H1 (cell line): ENCODE measurements at regions of chr15 and their contacts with region 1.

Region 1: DNA sequence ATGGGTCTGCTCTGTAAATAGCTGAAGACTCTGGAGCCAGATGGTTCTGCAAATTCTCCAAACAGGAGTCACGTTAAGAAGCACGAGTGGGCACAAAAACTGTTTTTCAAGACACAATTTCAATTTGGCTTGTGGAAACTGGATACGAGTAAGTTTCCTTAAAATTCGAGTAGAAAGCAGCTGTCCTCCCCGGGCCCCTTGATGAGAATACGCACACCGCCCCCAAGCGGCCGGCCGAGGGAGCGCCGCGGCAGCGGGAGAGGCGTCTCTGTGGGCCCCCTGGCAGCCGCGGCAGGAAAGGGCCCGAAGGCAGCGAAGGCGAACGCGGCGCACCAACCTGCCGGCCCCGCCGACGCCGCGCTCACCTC is 778 bp upstream of the THBS1 start:
- DNase-seq: peak; percentile 71 to 99
- H3K4me3 ChIP-seq: peak overlapping the region; percentile 58 to 81 (median 79)
- H3K27ac ChIP-seq: peak overlapping the region; percentile 87; the same call in 1 of the 2 replicates
- H3K4me1 ChIP-seq: peaks cover 9 to 24% (median 11%) of the 10 kb centered on the region in 4 experiments
- H3K27me3 ChIP-seq: peaks cover 0 to 5% (median 0%) of the 10 kb centered on the region in 4 experiments; a peak in 2 of 7 replicates
- CTCF ChIP-seq: peak; percentile 77 to 99 (median 79)
- EP300 ChIP-seq: no peak
- POLR2A ChIP-seq: peak; percentile 28 to 44; a peak in 2 of 3 replicates
- RAD21 ChIP-seq: peak; percentile 85 to 90

Region 2: DNA sequence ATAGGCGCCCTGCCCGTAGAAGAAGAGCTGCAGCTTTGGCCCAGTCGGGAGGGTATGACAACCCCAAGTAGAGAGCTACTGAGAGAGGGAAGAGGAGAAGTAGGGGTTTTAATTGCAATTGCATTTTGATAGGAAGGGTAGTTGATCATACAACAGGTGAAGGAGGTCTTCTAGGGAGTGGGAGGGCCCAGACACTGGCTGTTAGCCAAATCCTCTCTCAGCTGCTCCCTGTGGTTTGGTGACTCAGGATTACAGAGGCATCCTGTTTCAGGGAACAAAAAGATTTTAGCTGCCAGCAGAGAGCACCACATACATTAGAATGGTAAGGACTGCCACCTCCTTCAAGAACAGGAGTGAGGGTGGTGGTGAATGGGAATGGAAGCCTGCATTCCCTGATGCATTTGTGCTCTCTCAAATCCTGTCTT is 408.1 kb before region 1 on chr15:
- CTCF ChIA-PET with region 1: interaction called, 13 read pairs
- POLR2A ChIA-PET with region 1: interaction called, 41 read pairs
- DNase-seq: peak; percentile 58 to 77
- H3K4me3 ChIP-seq: no peak overlapping the region
- H3K27ac ChIP-seq: peak overlapping the region; percentile 67
- H3K4me1 ChIP-seq: peaks cover 5 to 17% (median 12%) of the 10 kb centered on the region in 4 experiments; a peak in 6 of 7 replicates
- H3K27me3 ChIP-seq: no peaks in the 10 kb centered on the region
- CTCF ChIP-seq: peak in 2 of 3 experiments; percentile 66 to 70; a peak in 3 of 4 replicates
- EP300 ChIP-seq: no peak
- POLR2A ChIP-seq: peak in 1 of 2 experiments; percentile 27; a peak in 1 of 3 replicates
- RAD21 ChIP-seq: peak; percentile 92 to 95

Region 3: DNA sequence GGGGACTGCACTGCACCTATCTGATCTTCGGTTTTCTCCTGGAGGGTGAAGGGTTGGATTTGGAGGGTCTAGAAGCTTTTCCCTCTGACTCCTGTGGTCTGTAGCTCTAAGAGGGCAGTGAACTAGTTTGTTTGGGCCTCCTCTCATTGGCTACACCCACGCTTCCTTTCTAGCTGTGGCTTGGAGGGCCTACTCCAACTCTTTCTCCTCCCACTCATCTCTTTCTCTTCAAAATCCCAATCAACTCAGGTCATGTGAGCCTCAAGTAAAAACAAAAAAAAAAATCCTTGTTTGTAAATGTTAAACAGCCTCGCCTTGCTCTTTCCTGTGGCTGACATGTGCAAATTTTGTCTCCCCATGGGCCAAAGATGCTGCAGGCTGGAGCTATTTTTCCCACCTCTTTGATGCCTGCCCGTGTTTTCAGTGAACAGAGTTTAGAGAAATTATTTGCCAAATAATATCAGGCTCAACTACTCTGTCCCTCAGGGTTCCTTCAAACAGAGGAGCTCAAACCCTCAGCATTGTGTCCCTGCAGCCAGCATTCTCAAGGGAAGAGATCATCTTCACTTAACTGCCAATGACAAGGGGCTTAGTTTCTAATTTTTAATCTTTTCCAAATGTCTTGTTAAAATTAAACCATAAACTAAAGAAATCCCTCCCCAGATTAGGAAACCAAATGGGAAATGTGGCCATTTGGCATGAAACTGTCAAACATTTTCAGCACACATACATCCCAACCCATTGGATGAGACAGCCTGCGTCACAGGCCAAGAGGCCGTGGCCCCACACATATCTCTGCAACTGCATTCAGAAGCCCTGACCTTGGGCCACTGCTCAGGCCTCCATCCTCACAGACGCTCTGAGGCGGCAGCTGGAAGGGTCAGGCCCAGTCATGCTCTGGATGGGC is 114.0 kb before region 1 on chr15:
- CTCF ChIA-PET with region 1: interaction called, 3 read pairs
- POLR2A ChIA-PET with region 1: interaction called, 12 read pairs
- DNase-seq: no peak
- H3K4me3 ChIP-seq: no peak overlapping the region
- H3K27ac ChIP-seq: no peak overlapping the region
- H3K4me1 ChIP-seq: no peaks in the 10 kb centered on the region; a peak in 1 of 7 replicates
- H3K27me3 ChIP-seq: no peaks in the 10 kb centered on the region
- CTCF ChIP-seq: no peak
- EP300 ChIP-seq: no peak
- POLR2A ChIP-seq: no peak
- RAD21 ChIP-seq: no peak

Region 4: DNA sequence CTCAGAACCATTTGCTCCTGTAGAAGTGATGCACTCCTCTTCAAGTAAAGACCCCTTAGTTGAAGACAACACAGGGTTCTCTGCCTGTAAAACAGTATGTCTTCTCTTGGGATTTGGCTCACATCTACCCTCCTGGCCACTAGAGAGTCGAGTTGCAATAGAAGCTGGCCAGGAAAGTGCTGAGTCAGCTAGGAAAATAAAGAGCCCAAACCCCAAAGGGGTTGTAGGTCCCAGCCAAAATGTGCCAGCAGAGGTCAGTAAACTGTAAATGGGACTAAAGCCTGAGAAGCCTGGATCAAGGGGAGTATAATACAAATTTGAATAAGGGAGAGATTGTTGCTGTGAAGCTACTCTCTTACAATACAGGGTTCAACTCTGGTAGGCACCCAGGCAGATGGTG is 36.5 kb before region 1 on chr15:
- CTCF ChIA-PET with region 1: interaction called, 11 read pairs
- POLR2A ChIA-PET with region 1: interaction called, 24 read pairs
- DNase-seq: peak; percentile 19 to 51
- H3K4me3 ChIP-seq: no peak overlapping the region
- H3K27ac ChIP-seq: no peak overlapping the region
- H3K4me1 ChIP-seq: no peaks in the 10 kb centered on the region
- H3K27me3 ChIP-seq: peaks cover 0 to 1% (median 0%) of the 10 kb centered on the region in 4 experiments; a peak in 1 of 7 replicates
- CTCF ChIP-seq: peak in 2 of 3 experiments; percentile 58 to 64; a peak in 3 of 4 replicates
- EP300 ChIP-seq: no peak
- POLR2A ChIP-seq: no peak
- RAD21 ChIP-seq: peak; percentile 29 to 58; a peak in 3 of 4 replicates

Region 5: DNA sequence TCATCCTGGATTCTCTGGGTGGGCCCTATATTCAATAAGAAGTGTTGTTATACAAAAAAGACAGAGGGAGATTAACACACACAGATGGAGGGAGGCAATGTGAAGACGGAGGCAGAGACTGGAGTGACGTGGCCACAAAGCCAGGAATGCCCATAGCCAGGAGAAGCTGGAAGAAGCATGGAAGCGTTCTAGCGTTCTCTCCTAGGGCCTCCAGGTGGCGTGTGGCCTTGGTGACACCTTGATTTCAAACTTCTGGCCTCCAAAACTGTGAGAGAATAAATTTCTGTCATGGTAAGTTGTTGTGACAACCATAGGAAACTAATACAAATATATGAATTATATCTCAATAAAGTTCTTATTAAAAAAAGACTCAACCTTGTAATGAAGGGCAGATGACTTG is 22.0 kb after region 1 on chr15:
- CTCF ChIA-PET with region 1: interaction called, 6 read pairs
- POLR2A ChIA-PET with region 1: interaction called, 117 read pairs
- DNase-seq: no peak
- H3K4me3 ChIP-seq: no peak overlapping the region
- H3K27ac ChIP-seq: no peak overlapping the region
- H3K4me1 ChIP-seq: no peaks in the 10 kb centered on the region
- H3K27me3 ChIP-seq: no peaks in the 10 kb centered on the region
- CTCF ChIP-seq: peak; percentile 53 to 72 (median 69)
- EP300 ChIP-seq: no peak
- POLR2A ChIP-seq: no peak
- RAD21 ChIP-seq: peak; percentile 71 to 77

Region 6: DNA sequence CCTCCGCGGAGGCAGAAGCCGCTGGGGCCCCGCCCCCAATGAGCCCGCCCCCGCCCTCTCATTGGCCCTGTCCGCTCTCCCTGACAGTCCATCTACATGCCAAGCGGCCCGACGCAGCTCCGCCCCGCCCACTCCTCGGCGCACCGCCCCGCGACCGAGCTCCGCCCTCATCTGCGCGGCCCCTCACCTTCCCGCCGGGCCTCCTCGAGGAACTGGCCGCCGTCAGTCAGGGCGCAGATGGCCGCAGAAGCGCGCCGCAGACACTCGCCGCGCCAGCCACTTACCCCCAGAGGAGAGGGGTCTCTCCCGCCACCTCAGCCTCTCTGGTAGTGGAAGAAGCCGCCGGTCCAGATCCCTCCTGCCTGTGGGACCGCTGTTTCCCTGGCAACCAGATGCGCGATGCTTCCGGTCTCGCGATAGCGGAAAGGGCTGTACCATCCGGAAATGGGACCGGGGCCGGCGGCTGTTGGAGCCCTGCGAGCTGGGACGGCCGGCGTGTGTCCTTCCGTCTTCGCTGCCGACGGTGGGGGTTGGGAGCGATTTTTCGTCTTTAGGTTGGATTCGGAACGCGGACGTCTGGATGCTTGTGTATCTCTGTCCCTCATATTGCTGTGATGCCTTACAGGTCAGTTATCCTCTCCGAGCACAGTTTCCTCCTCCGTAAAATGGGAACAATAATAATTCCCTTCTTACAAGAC is 202.5 kb after region 1 on chr15 and contains the start of gene FSIP1:
- CTCF ChIA-PET with region 1: no interaction called
- POLR2A ChIA-PET with region 1: interaction called, 10 read pairs
- DNase-seq: peak; percentile 76 to 99
- H3K4me3 ChIP-seq: peak within 1 kb of the TSS; percentile 73 to 97 (median 90)
- H3K27ac ChIP-seq: peak within 1 kb of the TSS; percentile 60
- H3K4me1 ChIP-seq: peaks cover 0 to 19% (median 13%) of the 10 kb centered on the region in 4 experiments; a peak in 5 of 7 replicates
- H3K27me3 ChIP-seq: no peaks in the 10 kb centered on the region
- CTCF ChIP-seq: no peak
- EP300 ChIP-seq: peak in 1 of 2 experiments; percentile 96; a peak in 2 of 3 replicates
- POLR2A ChIP-seq: peak in 1 of 2 experiments; percentile 80; a peak in 2 of 3 replicates
- RAD21 ChIP-seq: no peak
- total RNA-seq, gene FSIP1: 0.88 and 1.3 TPM in 2 replicates

Region 7: DNA sequence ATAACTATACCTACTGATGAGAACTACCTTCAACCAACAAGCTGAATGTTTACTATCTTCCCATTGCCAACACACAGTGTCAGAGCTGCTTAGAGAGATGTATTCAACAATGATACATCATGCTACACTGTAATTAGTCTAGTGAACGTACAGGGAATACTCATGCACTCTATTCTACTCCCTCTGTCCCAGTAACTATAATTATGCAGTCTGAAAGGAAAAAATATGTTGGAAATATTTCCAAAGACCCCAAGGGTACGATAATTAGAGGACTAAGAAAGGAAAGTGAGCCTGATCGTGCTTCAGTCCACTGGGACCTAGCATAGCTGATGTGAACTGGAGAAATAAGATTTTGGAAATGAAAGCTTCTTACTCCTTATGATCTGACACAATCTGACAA is 239.4 kb after region 1 on chr15:
- CTCF ChIA-PET with region 1: no interaction called
- POLR2A ChIA-PET with region 1: no interaction called
- DNase-seq: no peak
- H3K4me3 ChIP-seq: no peak overlapping the region
- H3K27ac ChIP-seq: no peak overlapping the region
- H3K4me1 ChIP-seq: peaks cover 0 to 13% (median 9%) of the 10 kb centered on the region in 4 experiments; a peak in 3 of 7 replicates
- H3K27me3 ChIP-seq: no peaks in the 10 kb centered on the region
- CTCF ChIP-seq: no peak
- EP300 ChIP-seq: no peak
- POLR2A ChIP-seq: no peak
- RAD21 ChIP-seq: no peak